Heart right ventricle (tissue), 16 donors: ENCODE measurements at regions of chr9 and their contacts with region 1.

Region 1: GRCh38 chr9:107637421-107638420 is 148.2 kb upstream of the KLF4 start:
- DNase-seq: peak; percentile 89 to 97
- ATAC-seq: peak; percentile 92 to 97 (median 94)
- H3K4me3 ChIP-seq: peak overlapping the region; percentile 11 to 60 (median 47)
- H3K27ac ChIP-seq: peak overlapping the region; percentile 88 to 100 (median 98)
- H3K4me1 ChIP-seq: peaks cover 2 to 44% (median 16%) of the 10 kb centered on the region in 9 donors
- H3K27me3 ChIP-seq: no peaks in the 10 kb centered on the region
- CTCF ChIP-seq: peak in 6 of 9 donors; percentile 22 to 52 (median 42)

Region 2: GRCh38 chr9:107548048-107548800 is 89.5 kb before region 1 on chr9:
- intact Hi-C with region 1: loop called in 1 of 10 experiments (anchors 1 kb)
- DNase-seq: peak in 1 of 2 donors; percentile 49
- ATAC-seq: peak in 7 of 8 donors; percentile 75 to 94 (median 91)
- H3K4me3 ChIP-seq: peak overlapping the region in 3 of 10 donors; percentile 29 to 30 (median 29)
- H3K27ac ChIP-seq: peak overlapping the region; percentile 41 to 85 (median 66)
- H3K4me1 ChIP-seq: peaks cover 0 to 21% (median 13%) of the 10 kb centered on the region in 9 donors
- H3K27me3 ChIP-seq: no peaks in the 10 kb centered on the region
- CTCF ChIP-seq: no peak

Region 3: DNA sequence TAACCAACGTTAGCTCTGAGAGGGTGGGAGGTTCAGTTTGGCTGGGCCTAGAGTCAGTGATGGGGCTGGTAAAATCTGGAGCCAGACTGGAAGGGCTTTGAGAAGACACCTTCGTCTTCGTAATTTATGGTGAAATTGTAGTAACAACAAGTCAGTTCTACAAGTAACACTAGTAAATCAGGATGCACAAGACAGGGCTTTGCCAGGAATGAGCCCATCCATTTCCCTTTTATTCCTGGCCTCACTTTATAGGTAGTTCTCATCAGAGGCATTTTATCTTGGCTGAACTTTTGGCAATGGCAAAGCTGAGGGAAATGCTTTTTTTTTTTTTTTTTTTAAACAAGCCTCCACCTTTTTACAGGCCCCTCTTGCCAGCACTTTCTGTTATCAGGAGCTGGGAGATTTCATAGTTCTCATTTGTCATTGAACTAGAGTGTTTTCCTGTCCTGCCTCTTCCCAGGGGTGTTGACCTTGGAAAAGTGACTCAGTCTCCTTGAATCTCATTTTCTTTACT is 37.6 kb before region 1 on chr9:
- intact Hi-C with region 1: loop called in 1 of 10 experiments (anchors 2 kb)
- DNase-seq: peak in 1 of 2 donors; percentile 66
- ATAC-seq: peak; percentile 80 to 96 (median 90)
- H3K4me3 ChIP-seq: no peak overlapping the region
- H3K27ac ChIP-seq: peak overlapping the region in 9 of 10 donors; percentile 42 to 88 (median 60)
- H3K4me1 ChIP-seq: peaks cover 6 to 41% (median 13%) of the 10 kb centered on the region in 9 donors
- H3K27me3 ChIP-seq: no peaks in the 10 kb centered on the region
- CTCF ChIP-seq: no peak

Region 4: GRCh38 chr9:107612136-107612535 is 25.6 kb before region 1 on chr9:
- intact Hi-C with region 1: no loop called
- DNase-seq: peak; percentile 53 to 68
- ATAC-seq: peak; percentile 59 to 94 (median 84)
- H3K4me3 ChIP-seq: no peak overlapping the region
- H3K27ac ChIP-seq: peak overlapping the region in 2 of 10 donors; percentile 23 to 38
- H3K4me1 ChIP-seq: peaks cover 0 to 39% (median 0%) of the 10 kb centered on the region in 9 donors
- H3K27me3 ChIP-seq: no peaks in the 10 kb centered on the region
- CTCF ChIP-seq: no peak

Region 5: DNA sequence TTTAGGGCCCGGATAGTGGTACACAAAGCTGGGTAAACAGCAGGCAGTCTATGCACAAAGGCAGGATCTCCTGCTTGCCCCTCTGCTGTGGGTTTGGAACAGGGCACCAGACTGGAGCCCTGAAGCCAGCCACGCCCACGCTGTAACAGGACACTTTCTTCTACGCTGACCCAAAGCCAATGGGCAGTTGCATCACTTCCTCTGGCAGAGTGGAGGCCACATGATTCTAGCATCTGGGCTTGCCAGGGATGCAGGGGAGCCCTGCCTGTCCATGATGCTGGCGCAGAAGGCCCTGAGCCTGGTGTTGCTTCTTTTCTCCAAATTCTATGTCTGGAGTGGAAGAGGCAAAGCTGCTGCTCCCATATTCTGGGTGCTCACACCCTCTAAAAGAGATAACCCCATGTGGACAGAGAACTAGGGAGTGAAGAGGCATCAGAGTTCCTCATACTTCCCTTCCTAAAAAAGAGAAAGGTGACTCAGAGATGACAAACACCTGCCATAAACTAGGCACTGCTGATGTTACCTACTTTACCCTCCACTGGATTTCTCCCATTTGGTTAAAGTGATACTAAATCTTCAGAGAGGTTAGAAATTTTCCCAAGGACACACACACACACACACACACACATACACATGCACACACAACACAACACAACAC is 112.2 kb after region 1 on chr9:
- intact Hi-C with region 1: loop called in 3 of 10 experiments (anchors 5 to 10 kb)
- DNase-seq: peak; percentile 81 to 91
- ATAC-seq: peak; percentile 88 to 96 (median 94)
- H3K4me3 ChIP-seq: no peak overlapping the region
- H3K27ac ChIP-seq: peak overlapping the region; percentile 56 to 84 (median 76)
- H3K4me1 ChIP-seq: peaks cover 7 to 52% (median 30%) of the 10 kb centered on the region in 9 donors
- H3K27me3 ChIP-seq: no peaks in the 10 kb centered on the region
- CTCF ChIP-seq: no peak

Region 6: GRCh38 chr9:107847978-107848964 is 210.6 kb after region 1 on chr9:
- intact Hi-C with region 1: no loop called
- DNase-seq: no peak
- ATAC-seq: peak in 1 of 8 donors; percentile 38
- H3K4me3 ChIP-seq: no peak overlapping the region
- H3K27ac ChIP-seq: peak overlapping the region in 1 of 10 donors; percentile 66
- H3K4me1 ChIP-seq: peaks cover 0 to 19% (median 0%) of the 10 kb centered on the region in 9 donors
- H3K27me3 ChIP-seq: no peaks in the 10 kb centered on the region
- CTCF ChIP-seq: no peak

Region 7: DNA sequence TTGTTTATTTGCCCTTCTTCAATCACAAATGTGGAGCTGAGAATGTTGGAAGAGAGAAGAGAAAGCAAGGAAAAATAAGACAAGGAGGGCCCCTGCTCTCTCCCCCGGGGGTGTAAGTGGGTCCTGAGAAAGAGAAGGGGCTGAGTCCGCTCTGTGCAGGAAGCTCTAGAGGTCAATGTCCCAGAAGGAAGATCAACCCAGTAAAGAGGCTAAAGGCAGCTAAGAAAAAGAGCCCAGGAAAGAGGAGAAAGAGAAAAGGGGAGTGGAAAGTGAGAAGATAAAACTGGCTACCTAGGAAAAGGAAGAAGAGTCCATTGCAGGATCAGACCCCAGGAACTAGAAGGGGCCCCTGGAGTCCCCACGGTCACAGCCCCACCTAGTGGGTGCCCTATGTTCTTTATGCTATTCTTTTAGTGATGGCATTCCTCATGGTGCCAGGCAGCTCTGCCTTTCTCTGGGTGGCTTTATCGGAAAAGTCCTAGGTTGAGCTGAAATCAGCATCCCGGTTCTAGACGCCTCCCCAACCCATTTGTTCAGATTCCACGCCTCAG is 634.7 kb after region 1 on chr9:
- intact Hi-C with region 1: loop called in 1 of 10 experiments (anchors 5 kb)
- DNase-seq: peak; percentile 43 to 46
- ATAC-seq: peak; percentile 69 to 93 (median 86)
- H3K4me3 ChIP-seq: peak overlapping the region in 6 of 10 donors; percentile 1 to 42 (median 24)
- H3K27ac ChIP-seq: peak overlapping the region in 7 of 10 donors; percentile 10 to 71 (median 52)
- H3K4me1 ChIP-seq: peaks cover 0 to 23% (median 8%) of the 10 kb centered on the region in 9 donors
- H3K27me3 ChIP-seq: no peaks in the 10 kb centered on the region
- CTCF ChIP-seq: peak; percentile 49 to 76 (median 65)